OCI-LY7 (cell line): ENCODE measurements at regions of chr13 and their contacts with region 1.

Region 1: DNA sequence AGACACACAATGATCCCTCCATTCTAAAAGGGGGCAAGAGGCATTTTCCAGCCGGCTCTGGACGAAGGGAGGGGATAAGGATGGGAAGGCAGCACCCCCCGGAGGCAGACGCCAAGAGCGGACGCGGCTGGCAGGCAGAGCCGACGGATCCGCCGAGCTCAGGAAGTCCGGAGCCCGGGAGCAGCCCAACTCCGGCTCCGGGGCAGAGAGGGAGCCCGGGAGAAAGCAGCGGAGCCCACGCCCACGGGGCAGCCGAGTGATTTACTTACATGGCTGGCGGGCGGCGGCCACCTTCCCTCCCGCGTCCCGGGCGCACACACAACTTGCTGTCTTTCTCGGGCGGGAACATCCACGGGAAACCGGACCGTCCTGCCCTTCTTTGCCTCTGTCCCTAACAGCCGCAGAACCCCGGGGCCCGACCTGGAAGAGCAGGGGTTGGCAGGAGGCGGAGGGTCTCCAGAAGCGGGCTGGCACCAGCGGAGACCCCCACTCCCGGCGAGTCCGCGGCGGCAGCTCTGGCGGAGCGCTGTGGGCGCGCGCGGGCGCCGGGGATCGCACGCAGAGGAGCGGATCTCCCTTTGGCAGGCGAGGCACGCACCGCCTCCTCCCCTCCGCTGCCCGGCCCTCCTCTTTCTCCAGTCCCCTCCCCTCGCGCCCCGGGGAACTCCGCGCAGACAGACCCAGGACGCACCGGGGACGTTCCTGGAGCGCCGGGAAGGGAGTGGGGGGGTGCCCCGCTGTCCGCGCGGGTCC is at the start of gene LHFPL6:
- DNase-seq: peak; percentile 69
- H3K4me3 ChIP-seq: peak within 1 kb of the TSS; percentile 92
- H3K27ac ChIP-seq: peak within 1 kb of the TSS; percentile 72
- H3K4me1 ChIP-seq: peaks cover 25% of the 10 kb centered on the region
- CTCF ChIP-seq: no peak; the same call in none of the 2 replicates
- total RNA-seq, gene LHFPL6: 27.7 TPM in 2 replicates

Region 2: DNA sequence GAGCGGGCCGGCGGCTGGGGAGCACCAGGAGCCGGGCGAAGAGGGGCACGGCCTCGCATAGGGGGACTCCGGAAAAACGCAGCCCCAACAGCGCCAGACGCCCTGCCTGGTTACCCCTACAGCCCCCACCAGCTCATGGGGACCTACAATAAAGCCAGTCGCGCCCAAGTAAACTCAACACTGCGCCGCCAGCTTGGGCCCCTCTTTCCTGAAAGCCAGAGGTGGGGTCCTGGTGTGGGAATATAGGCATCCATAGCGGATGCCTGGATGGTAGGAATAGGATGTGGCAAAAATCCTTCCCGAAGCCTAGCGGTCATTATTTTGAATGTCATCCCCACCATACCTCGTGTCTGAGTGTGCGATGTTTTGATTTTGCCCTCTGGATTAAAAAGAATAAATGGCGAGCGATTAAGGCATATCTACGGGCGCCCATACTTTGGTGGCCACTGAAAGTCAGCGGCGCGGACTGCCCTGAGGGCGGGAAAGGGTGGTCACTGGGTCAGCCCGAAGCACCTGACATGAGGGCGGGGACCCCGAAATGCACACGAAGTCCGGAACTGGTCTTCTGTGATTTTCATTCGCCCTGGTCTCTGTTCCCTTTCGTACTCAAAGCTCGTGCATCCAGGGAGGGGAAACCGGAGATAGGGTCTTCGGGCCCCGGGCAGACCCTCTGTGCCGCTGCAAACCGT is 564.8 kb before region 1 on chr13 and contains the starts of genes NHLRC3 and PROSER1:
- CTCF ChIA-PET with region 1: interaction called, 3 read pairs
- POLR2A ChIA-PET with region 1: no interaction called
- intact Hi-C with region 1: loop called (anchors 2 kb)
- DNase-seq: peak; percentile 97
- H3K4me3 ChIP-seq: peak within 1 kb of the TSS; percentile 93
- H3K27ac ChIP-seq: peak within 1 kb of the TSS; percentile 80
- H3K4me1 ChIP-seq: peaks cover 36% of the 10 kb centered on the region
- CTCF ChIP-seq: no peak
- total RNA-seq, gene NHLRC3: 26.8 and 28.6 TPM in 2 replicates
- total RNA-seq, gene PROSER1: 35.3 and 43.3 TPM in 2 replicates

Region 3: DNA sequence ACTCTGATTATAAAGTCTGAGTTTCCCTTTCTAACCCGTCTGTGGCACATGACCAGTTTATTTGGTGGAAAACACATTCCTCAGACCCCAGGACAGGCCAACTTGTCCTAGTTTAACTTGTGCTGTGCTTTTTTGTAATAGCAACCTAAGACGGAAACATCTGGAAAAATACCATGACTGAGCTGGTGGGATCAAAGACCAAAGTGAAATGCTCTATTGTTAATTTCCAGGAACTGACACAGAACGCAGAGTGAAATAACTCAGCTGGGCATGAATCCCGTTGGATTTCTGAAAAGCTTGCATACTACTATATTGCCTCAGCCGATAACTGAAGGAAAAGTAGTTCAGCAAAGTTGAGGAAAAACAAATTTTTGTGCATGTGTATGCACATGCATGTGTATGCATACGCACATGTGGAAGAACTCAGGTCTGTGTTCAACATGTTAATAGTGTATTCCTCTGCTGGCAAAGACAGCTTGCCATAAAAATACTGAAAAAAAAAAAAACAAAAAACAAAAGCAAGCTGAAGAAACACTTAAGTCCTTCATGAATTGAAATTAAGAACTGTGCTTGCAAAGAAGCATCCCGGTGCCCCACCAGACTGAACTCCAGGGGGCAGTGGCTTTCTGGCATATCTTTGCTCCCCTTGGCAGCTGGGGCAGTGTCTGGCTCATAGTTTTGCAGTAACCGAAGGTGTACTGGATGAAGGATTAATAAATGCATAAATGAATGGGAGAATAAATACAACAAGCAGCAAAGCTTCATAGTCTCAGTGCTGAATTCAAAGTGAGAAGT is 187.6 kb before region 1 on chr13:
- CTCF ChIA-PET with region 1: no interaction called
- POLR2A ChIA-PET with region 1: no interaction called
- intact Hi-C with region 1: loop called (anchors 1 kb)
- DNase-seq: peak; percentile 64
- H3K4me3 ChIP-seq: no peak overlapping the region
- H3K27ac ChIP-seq: no peak overlapping the region
- H3K4me1 ChIP-seq: peaks cover 14% of the 10 kb centered on the region
- CTCF ChIP-seq: peak; percentile 85

Region 4: GRCh38 chr13:39496440-39497010 is 106.3 kb before region 1 on chr13:
- CTCF ChIA-PET with region 1: no interaction called
- POLR2A ChIA-PET with region 1: no interaction called
- intact Hi-C with region 1: loop called (anchors 5 kb)
- DNase-seq: no peak
- H3K4me3 ChIP-seq: no peak overlapping the region
- H3K27ac ChIP-seq: no peak overlapping the region
- H3K4me1 ChIP-seq: peaks cover 9% of the 10 kb centered on the region
- CTCF ChIP-seq: no peak

Region 5: DNA sequence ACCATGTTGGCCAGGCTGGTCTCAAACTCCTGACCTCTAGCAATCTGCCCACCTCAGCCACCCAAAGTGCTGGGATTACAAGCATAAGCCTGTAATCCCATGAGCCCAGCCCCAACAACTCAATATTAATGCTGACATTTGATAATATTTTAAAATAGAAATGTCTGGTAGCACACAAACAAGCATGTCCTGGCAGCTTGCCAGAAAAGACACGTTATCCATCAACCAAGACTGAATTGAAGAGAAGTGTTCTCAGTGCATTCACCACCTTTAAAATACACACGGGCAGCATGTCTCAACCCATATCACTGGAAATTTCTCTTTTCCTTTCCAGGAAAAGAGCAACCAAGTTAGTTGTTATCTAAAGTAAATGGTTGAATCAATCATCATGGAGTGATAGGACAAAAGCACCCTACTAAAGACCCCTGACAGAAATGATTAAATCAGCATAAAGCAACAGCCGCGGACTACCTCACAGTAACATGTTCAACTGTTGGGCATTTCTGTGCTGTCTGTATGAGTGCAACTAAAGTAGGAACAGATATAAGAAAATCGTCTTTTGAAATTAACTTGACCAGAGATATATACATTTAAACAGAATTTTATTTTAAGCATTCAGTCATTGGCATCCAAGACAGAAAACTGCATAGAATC is 24.8 kb before region 1 on chr13:
- CTCF ChIA-PET with region 1: interaction called, 5 read pairs
- POLR2A ChIA-PET with region 1: interaction called, 13 read pairs
- intact Hi-C with region 1: loop called (anchors 2 kb)
- DNase-seq: peak; percentile 57
- H3K4me3 ChIP-seq: peak overlapping the region; percentile 58
- H3K27ac ChIP-seq: peak overlapping the region; percentile 99
- H3K4me1 ChIP-seq: peaks cover 81% of the 10 kb centered on the region
- CTCF ChIP-seq: no peak

Region 6: DNA sequence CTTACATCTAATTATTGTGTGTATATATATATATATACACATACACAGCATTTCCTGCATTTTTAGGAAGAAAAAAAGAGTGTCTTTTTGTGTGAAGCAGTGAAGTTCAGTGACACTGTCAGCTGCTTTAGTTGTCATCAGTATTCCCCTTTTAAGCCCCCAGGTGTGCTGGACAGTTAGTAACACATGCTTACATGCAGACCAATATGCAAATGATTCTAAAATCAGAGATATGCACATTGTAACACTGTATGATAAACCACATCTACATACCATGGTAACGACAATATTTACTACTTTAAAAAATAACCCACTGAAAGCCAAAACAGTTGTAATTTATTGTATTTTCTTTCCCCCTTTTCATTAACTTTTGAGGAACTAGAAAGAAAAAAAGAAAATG is 16.6 kb before region 1 on chr13:
- CTCF ChIA-PET with region 1: interaction called, 8 read pairs
- POLR2A ChIA-PET with region 1: interaction called, 90 read pairs
- intact Hi-C with region 1: loop called (anchors 1 kb)
- DNase-seq: peak; percentile 91
- H3K4me3 ChIP-seq: peak overlapping the region; percentile 56
- H3K27ac ChIP-seq: peak overlapping the region; percentile 99
- H3K4me1 ChIP-seq: peaks cover 99% of the 10 kb centered on the region
- CTCF ChIP-seq: no peak

Region 7: DNA sequence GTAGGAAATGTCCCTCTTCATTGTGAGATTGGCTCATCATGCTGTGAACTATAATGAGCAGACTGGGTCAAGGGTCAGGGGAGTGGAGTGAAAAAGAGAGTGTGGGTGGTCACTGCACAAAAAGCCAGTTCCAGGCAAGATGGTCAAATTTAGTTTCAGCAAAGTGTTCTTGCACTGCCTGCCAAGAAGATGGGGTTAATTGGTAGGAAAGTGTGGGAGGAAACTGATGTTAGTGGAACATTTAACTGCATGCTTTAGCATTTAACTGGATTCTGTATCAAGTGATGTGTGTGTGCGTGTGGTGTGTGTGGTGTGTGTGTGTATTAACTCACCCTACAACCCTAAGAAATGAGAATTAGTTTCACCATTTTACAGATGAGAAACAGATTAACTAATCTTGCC is 184.3 kb after region 1 on chr13:
- CTCF ChIA-PET with region 1: no interaction called
- POLR2A ChIA-PET with region 1: no interaction called
- intact Hi-C with region 1: no loop called
- DNase-seq: no peak
- H3K4me3 ChIP-seq: no peak overlapping the region
- H3K27ac ChIP-seq: no peak overlapping the region
- H3K4me1 ChIP-seq: no peaks in the 10 kb centered on the region
- CTCF ChIP-seq: no peak